ENCODE measurements at regions of chr4 and their contacts with region 1.

Region 1: DNA sequence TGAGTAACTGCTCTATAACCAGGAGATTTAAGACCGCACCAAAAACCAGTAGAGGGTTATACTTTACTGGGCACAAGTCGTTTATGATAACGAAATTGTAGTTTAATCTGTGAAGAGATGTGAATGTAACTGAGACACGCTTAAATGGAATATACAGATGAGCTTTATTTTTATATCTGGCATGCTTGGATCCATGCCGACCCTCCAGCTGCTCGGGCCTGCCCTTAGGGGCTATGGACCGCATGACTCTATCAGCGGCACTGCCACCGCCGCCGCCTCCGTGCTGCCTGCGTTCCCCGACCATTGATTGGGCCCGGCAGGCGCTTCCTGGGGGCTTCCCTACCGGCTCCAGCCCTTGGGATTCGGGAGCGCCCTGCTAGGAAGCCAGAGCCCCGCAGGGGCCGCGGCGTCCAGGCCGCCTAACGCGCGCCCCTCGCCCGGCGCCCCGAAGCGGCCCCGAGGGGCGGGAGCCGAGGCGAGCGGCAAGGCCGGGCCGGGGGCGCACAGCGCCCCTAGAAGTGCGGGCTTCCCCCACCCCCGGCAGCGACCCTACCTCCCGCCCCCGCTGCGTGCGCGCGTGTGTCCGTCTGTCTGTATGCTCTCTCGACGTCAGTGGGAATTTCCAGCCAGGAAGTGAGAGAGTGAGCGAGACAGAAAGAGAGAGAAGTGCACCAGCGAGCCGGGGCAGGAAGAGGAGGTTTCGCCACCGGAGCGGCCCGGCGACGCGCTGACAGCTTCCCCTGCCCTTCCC is at the start of gene NFKB1:
- DNase-seq: peak; percentile 47
- H3K4me3 ChIP-seq: peak within 1 kb of the TSS; percentile 78 to 86
- H3K27ac ChIP-seq: peak within 1 kb of the TSS; percentile 96 to 98
- H3K4me1 ChIP-seq: no peaks in the 10 kb centered on the region
- H3K27me3 ChIP-seq: no peaks in the 10 kb centered on the region
- CTCF ChIP-seq: no peak
- POLR2A ChIP-seq: no peak
- total RNA-seq, gene NFKB1: 32.3 to 35.4 TPM

Region 2: GRCh38 chr4:102129810-102130209 is 371.1 kb before region 1 on chr4:
- intact Hi-C with region 1: no loop called
- DNase-seq: no peak
- H3K4me3 ChIP-seq: no peak overlapping the region
- H3K27ac ChIP-seq: no peak overlapping the region
- H3K4me1 ChIP-seq: no peaks in the 10 kb centered on the region
- H3K27me3 ChIP-seq: no peaks in the 10 kb centered on the region
- CTCF ChIP-seq: no peak
- POLR2A ChIP-seq: no peak

Region 3: GRCh38 chr4:102483120-102483519 is 17.8 kb before region 1 on chr4:
- intact Hi-C with region 1: no loop called
- DNase-seq: no peak
- H3K4me3 ChIP-seq: no peak overlapping the region
- H3K27ac ChIP-seq: no peak overlapping the region
- H3K4me1 ChIP-seq: no peaks in the 10 kb centered on the region
- H3K27me3 ChIP-seq: no peaks in the 10 kb centered on the region
- CTCF ChIP-seq: no peak
- POLR2A ChIP-seq: no peak

Region 4: GRCh38 chr4:102604222-102604948 is 103.5 kb after region 1 on chr4:
- intact Hi-C with region 1: loop called (anchors 5 kb)
- DNase-seq: no peak
- H3K4me3 ChIP-seq: no peak overlapping the region
- H3K27ac ChIP-seq: no peak overlapping the region
- H3K4me1 ChIP-seq: no peaks in the 10 kb centered on the region
- H3K27me3 ChIP-seq: no peaks in the 10 kb centered on the region
- CTCF ChIP-seq: no peak
- POLR2A ChIP-seq: no peak

Region 5: DNA sequence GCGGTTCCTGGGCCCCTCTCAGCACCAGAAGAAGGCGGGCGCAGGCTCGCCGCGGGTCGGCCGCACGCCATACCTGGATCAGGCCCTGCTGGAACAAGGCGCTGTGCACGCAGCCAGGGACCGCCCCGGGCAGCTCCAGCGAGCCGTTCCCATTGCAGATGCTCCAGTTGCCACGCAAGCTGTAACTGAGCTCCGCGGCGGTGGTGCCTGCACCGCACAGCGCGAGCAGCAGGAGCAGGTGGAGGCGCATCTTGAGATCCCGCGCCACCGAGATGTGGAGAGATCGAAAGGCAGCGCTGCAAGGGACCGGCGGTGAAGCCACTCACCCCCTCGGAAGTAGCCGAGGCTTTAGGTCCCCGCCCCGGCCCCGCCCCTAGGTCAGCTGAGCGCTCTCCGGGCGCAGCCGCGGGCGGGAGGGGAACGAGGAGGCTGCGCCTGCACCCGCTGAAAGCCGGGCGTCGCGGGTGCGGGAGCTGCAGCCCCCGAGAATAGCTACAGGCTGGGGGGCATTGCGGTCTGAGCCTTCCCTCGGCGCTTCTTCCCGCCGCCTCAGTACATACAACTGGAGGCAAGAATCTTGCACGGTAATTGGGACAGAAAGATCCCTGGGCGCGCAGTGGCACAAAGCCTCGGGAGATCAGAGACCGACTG is 259.9 kb after region 1 on chr4 and contains the start of gene MANBA:
- intact Hi-C with region 1: loop called (anchors 5 kb)
- DNase-seq: peak; percentile 77
- H3K4me3 ChIP-seq: peak within 1 kb of the TSS; percentile 73 to 84
- H3K27ac ChIP-seq: peak within 1 kb of the TSS; percentile 64 to 71
- H3K4me1 ChIP-seq: no peaks in the 10 kb centered on the region
- H3K27me3 ChIP-seq: no peaks in the 10 kb centered on the region
- CTCF ChIP-seq: no peak
- POLR2A ChIP-seq: peak; percentile 89
- total RNA-seq, gene MANBA: 29.7 to 41.6 TPM

Region 6: DNA sequence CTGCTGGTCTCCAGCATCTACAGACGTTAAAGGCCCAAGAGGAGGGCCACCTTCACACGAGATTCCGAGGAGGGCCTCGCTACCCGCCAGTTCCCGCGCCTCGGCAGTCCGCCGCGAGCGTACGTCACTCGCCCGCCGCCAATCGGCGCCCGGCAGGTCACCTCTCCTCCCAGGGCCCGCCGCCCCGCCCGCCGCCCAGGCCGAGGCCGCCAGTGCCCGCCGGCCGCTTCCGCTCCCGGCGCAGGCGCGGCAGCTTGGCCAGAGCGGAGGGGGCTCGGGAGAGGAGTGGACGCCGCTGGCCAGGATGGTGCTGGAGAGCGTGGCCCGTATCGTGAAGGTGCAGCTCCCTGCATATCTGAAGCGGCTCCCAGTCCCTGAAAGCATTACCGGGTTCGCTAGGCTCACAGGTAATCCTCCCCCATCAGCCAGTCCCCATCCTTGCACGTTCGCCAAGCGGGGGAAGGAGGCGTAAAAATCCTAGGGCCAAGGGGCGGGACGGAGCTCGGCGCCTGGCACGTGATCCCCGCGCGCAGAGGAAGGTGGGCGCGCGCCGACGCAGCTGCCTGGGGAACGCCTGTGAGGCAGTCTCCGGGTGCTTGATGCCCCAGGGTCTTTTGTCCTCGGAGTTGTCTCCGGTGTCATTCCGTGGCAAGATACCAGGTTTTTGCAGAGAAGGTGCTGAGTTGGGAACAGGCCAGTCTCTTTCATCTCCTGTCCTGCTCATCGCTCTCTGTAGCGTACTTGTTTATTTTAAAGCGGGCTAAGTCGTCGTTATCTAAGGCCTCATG is 368.1 kb after region 1 on chr4 and contains the start of gene CISD2:
- intact Hi-C with region 1: loop called (anchors 5 kb)
- DNase-seq: peak; percentile 91
- H3K4me3 ChIP-seq: peak within 1 kb of the TSS; percentile 62 to 67
- H3K27ac ChIP-seq: peak within 1 kb of the TSS; percentile 89 to 99
- H3K4me1 ChIP-seq: no peaks in the 10 kb centered on the region
- H3K27me3 ChIP-seq: no peaks in the 10 kb centered on the region
- CTCF ChIP-seq: peak in 1 of 4 experiments; percentile 26
- POLR2A ChIP-seq: peak; percentile 72
- total RNA-seq, gene CISD2: 4.2 to 16.4 TPM

Region 7: DNA sequence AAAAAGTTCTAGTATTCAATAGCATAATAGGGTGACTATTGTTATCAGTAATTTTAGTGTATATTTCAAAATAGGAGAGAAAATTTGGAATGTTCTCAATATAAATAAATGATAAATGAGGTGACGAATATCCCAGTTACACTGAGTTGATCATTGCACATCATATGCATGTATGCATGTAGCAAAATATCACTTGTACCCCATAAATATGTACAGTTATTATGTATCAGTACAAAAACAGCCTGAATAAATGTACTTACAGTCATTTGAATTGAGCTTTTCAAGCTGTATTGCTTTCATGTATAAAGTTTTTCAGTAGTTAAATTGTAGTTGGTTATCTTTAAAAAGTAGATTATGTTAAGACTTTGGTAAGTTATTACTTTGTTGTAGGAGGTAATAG is 380.5 kb after region 1 on chr4:
- intact Hi-C with region 1: no loop called
- DNase-seq: no peak
- H3K4me3 ChIP-seq: no peak overlapping the region
- H3K27ac ChIP-seq: no peak overlapping the region
- H3K4me1 ChIP-seq: no peaks in the 10 kb centered on the region
- H3K27me3 ChIP-seq: no peaks in the 10 kb centered on the region
- CTCF ChIP-seq: no peak
- POLR2A ChIP-seq: no peak

Region 8: GRCh38 chr4:103019308-103020124 is 518.6 kb after region 1 on chr4 and contains the start of gene SLC9B1:
- intact Hi-C with region 1: loop called (anchors 10 kb)
- DNase-seq: peak; percentile 97
- H3K4me3 ChIP-seq: peak within 1 kb of the TSS; percentile 29 to 40
- H3K27ac ChIP-seq: peak within 1 kb of the TSS; percentile 87 to 88
- H3K4me1 ChIP-seq: no peaks in the 10 kb centered on the region
- H3K27me3 ChIP-seq: no peaks in the 10 kb centered on the region
- CTCF ChIP-seq: peak in 2 of 4 experiments; percentile 8 to 26
- POLR2A ChIP-seq: peak; percentile 72
- total RNA-seq, gene SLC9B1: 9.3 TPM in 1 of 2 donors, not detected in the other